Heart right ventricle (tissue), 16 donors: ENCODE measurements at regions of chr7 and their contacts with region 1.

Region 1: DNA sequence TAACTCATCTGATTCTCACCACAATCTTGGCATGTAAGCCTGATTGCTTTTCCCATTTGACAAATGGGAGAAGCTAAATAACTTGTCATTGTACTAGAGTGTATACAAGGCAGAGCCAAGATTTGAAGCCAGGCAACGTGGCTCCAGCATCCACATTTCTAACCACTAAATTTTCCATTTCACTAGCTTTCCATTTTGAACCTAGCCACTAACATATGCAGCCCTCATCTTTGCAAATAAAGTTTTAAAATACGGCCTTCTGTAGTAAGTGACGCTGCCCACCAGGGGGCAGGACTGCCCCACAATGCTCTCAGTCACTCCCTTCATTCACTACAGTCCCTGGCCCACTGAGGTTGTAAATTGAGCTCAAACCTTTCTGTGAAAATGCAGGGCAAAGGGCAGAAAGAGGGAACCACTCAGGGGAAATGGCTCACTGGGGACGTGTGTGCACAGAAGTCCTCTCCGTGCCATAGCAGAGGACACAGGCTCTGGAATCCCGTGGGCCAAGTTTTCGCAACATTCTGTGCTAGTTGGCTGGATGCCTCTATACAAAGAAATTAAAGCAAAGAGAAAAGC is 315.7 kb downstream of the TNS3 start:
- DNase-seq: peak; percentile 48 to 64
- ATAC-seq: peak; percentile 77 to 89 (median 83)
- H3K4me3 ChIP-seq: no peak overlapping the region
- H3K27ac ChIP-seq: peak overlapping the region in 1 of 10 donors; percentile 13
- H3K4me1 ChIP-seq: peaks cover 0 to 14% (median 4%) of the 10 kb centered on the region in 9 donors
- H3K27me3 ChIP-seq: no peaks in the 10 kb centered on the region
- CTCF ChIP-seq: peak; percentile 81 to 97 (median 92)

Region 2: DNA sequence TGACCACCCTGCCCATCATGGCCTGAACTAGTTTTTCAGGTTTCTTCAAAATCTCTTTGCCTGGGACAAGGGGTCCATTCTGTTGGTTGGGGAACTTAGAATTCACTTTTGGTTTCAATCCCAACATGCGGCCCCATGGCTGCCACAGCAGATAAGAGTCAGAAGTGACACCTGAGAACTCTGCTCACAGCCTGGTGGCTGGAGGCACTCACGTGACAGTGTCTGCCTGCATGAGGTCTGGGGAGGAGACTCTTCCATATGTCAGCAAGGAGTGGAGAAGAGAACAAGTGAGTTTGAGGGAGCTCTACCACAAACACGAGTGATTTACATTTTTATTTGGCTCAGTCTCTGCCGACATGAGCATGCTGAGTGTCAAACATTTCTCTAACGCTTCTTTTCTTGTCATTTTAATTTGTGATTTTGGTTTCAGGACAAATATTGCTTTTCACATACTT is 54.7 kb before region 1 on chr7:
- intact Hi-C with region 1: no loop called
- DNase-seq: no peak
- ATAC-seq: no peak
- H3K4me3 ChIP-seq: no peak overlapping the region
- H3K27ac ChIP-seq: no peak overlapping the region
- H3K4me1 ChIP-seq: peaks cover 0 to 7% (median 0%) of the 10 kb centered on the region in 9 donors
- H3K27me3 ChIP-seq: peaks cover 0 to 3% (median 0%) of the 10 kb centered on the region in 7 donors
- CTCF ChIP-seq: no peak

Region 3: DNA sequence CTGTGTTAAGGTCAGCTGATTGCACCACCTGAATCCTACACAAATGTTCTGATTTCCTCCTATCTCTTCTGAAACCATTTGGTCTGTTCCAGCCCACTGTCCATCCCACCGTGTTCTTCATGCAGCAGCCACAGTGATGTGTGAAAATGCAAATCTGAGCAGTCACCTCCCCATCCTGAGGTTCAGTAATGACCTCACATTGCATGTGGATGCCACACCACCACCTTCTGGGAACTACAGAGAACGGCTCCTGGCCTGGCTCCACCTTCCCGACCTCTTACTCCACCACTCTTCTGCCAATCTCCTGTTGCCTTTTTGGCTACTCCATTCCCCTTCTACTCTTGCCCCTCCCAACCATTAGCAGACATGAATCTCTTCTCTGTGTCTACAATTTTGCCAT is 71.3 kb after region 1 on chr7:
- intact Hi-C with region 1: loop called in 2 of 10 experiments (anchors 5 to 10 kb)
- DNase-seq: peak; percentile 38 to 42
- ATAC-seq: peak in 7 of 8 donors; percentile 56 to 75 (median 67)
- H3K4me3 ChIP-seq: no peak overlapping the region
- H3K27ac ChIP-seq: peak overlapping the region in 5 of 10 donors; percentile 70 to 82 (median 77)
- H3K4me1 ChIP-seq: peaks cover 0 to 52% (median 30%) of the 10 kb centered on the region in 9 donors
- H3K27me3 ChIP-seq: no peaks in the 10 kb centered on the region
- CTCF ChIP-seq: peak in 6 of 9 donors; percentile 9 to 48 (median 40)

Region 4: GRCh38 chr7:47392231-47392759 is 126.1 kb after region 1 on chr7:
- intact Hi-C with region 1: loop called in 1 of 10 experiments (anchors 10 kb)
- DNase-seq: peak; percentile 53 to 76
- ATAC-seq: peak; percentile 80 to 91 (median 84)
- H3K4me3 ChIP-seq: no peak overlapping the region
- H3K27ac ChIP-seq: no peak overlapping the region
- H3K4me1 ChIP-seq: peaks cover 0 to 11% (median 6%) of the 10 kb centered on the region in 9 donors
- H3K27me3 ChIP-seq: no peaks in the 10 kb centered on the region
- CTCF ChIP-seq: peak; percentile 9 to 58 (median 37)

Region 5: DNA sequence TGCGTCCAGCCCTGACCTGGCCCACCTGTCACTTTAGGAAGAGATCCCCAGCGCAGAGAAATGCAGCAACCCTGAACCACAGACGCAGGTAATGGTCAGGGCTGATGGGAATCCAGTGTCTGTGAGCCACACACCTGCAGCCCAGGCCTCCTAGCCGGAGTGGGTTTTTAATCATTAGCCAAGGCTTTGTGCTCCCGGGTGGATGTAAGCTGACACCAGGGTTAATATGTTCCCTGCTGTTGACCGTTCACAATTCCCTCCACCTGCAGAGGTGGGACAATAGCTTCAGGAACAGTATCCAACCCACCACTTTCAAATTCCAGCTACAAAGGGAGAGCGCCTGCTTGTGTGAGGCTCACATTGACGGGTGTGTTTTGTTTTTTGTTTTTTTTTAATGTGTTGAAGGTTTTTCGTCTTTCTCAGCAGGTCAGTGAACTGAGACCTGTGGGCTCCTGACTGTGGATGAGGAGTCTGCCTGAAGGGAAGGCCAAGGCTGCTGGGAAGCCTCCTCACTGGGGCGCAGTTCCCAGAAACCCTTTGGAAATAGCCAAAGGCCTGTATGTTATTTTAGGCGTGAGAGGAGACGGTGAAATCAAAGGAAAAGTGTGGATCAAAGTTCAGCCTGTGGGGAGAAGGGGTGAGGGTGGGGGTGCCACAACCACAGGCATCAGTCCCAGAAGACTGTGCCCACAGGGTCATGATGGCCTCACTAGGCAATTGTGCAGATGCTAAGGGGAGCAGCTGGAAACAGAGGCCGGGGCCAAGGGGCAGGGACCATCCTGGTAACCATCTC is 204.5 kb after region 1 on chr7:
- intact Hi-C with region 1: no loop called
- DNase-seq: no peak
- ATAC-seq: no peak
- H3K4me3 ChIP-seq: no peak overlapping the region
- H3K27ac ChIP-seq: peak overlapping the region in 3 of 10 donors; percentile 15 to 31 (median 30)
- H3K4me1 ChIP-seq: peaks cover 0 to 39% (median 16%) of the 10 kb centered on the region in 9 donors
- H3K27me3 ChIP-seq: no peaks in the 10 kb centered on the region
- CTCF ChIP-seq: no peak

Region 6: GRCh38 chr7:47581806-47582763 is 315.9 kb after region 1 on chr7 and contains the start of gene TNS3:
- intact Hi-C with region 1: loop called in 1 of 10 experiments (anchors 10 kb)
- DNase-seq: peak in 1 of 2 donors; percentile 60
- ATAC-seq: peak; percentile 43 to 72 (median 57)
- H3K4me3 ChIP-seq: peak within 1 kb of the TSS; percentile 62 to 89 (median 73)
- H3K27ac ChIP-seq: peak within 1 kb of the TSS in 9 of 10 donors; percentile 23 to 92 (median 72)
- H3K4me1 ChIP-seq: peaks cover 0 to 77% (median 50%) of the 10 kb centered on the region in 9 donors
- H3K27me3 ChIP-seq: peaks cover 0 to 8% (median 0%) of the 10 kb centered on the region in 7 donors
- CTCF ChIP-seq: peak in 7 of 9 donors; percentile 5 to 43 (median 22)
- total RNA-seq, gene TNS3: 29.9 to 74.2 (median 35.6) TPM

Region 7: GRCh38 chr7:47651355-47652317 is 385.4 kb after region 1 on chr7:
- intact Hi-C with region 1: no loop called
- DNase-seq: no peak
- ATAC-seq: peak in 5 of 8 donors; percentile 29 to 67 (median 51)
- H3K4me3 ChIP-seq: no peak overlapping the region
- H3K27ac ChIP-seq: peak overlapping the region in 6 of 10 donors; percentile 27 to 70 (median 50)
- H3K4me1 ChIP-seq: peaks cover 0 to 48% (median 16%) of the 10 kb centered on the region in 9 donors
- H3K27me3 ChIP-seq: no peaks in the 10 kb centered on the region
- CTCF ChIP-seq: no peak

Region 8: DNA sequence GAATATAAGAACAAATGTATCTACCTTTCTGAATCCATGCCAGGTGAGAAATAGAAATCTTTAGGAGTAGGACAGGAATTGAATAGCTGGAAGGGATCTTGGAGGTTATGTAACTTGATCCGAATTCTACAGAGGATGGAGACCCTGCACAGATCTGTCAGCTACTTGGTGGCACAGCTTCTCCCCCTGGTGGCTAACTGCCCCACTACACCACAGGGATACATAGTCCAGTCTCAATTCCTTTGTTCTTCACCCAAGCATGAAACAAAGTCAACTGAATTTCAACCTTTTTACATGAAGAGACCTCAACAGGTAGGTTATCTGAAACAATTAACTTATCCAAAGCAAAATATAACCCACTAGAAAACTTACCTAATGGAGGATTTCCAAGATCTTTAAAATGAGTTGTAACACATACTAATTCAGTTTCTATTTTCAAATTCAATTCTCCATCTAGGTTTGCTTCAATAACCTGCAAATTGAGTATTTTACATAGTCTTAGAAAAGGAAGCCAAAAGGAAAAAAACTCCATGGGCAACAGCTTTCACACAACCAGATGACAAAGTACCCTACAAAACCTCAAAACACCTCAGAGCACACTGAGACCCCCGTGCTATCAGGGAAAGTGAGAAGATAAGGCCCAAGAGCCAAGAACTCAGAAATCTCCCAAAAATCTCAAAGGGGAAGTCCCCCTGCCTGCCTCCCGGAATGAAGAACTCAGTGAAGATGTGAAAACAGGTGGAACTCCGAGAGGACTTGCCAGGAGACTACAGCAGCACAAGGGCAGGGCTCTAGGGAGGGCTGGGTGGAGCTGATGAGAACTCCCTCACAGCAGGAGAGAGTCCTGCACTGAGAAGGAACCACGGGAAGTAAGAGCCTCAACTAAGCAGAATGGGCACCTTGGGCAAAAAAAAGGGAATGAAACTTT is 702.9 kb after region 1 on chr7:
- intact Hi-C with region 1: loop called in 1 of 10 experiments (anchors 5 kb)
- DNase-seq: peak; percentile 64 to 72
- ATAC-seq: peak; percentile 68 to 85 (median 74)
- H3K4me3 ChIP-seq: no peak overlapping the region
- H3K27ac ChIP-seq: peak overlapping the region in 5 of 10 donors; percentile 1 to 67 (median 17)
- H3K4me1 ChIP-seq: peaks cover 0 to 57% (median 21%) of the 10 kb centered on the region in 9 donors
- H3K27me3 ChIP-seq: no peaks in the 10 kb centered on the region
- CTCF ChIP-seq: peak; percentile 68 to 94 (median 89)